Activated CD4-positive, alpha-beta memory T cell treated with anti-CD3 and anti-CD28 coated beads for 36 hours (primary cell): ENCODE measurements at regions of chr5 and their contacts with region 1.

Region 1: GRCh38 chr5:88680253-88681132 is 202.5 kb downstream of the MEF2C start:
- DNase-seq: peak; percentile 80
- H3K4me3 Mint-ChIP-seq: no peak overlapping the region
- H3K27ac Mint-ChIP-seq: no peak overlapping the region
- H3K4me1 Mint-ChIP-seq: peaks cover 12% of the 10 kb centered on the region
- H3K27me3 Mint-ChIP-seq: peaks cover 69% of the 10 kb centered on the region

Region 2: DNA sequence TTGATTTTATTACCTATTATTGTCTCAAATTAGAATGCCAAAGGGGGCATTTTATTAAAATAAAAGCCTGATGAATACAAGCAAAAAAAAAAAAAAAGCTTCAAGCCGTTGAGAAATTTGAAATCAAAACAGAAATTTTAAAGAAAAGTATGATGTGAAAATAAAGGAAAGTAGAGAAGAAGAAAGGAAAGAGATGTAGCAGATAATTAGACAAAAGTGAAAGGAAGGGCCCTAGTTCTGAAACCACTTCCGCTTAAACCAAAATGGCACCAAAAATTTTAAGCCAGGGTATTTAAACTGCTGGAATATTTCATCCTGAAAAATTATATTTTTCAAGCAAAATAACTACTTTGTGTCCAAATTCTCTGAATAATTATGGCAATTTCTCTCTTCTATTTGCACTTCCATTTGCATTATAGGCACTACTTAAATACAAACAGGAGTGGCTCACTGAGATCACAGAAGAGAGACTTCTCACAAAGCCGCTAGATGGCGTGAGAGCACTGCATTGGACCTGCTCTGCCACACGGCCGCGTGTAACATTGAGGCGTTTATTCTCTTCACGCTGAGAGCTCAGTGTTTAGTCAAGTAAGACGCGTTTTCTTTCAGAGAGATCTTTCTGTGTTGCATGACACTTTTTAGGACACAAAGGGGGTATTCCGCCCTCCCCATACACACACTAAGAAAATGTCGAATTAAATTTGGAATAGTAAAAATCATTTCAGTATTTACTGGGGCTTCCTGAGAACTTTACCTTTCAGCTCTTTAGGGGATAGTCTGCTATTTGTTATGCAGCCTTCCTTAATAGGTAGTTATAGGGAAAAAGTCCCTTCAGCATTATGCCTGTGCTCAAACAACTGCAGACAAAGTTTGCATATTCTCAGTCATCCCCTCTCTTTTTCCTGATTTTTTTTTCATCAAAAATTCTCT is 899.4 kb before region 1 on chr5:
- CTCF ChIA-PET with region 1: interaction called, 55 read pairs
- POLR2A ChIA-PET with region 1: no interaction called
- intact Hi-C with region 1: loop called (anchors 1 kb)
- DNase-seq: peak; percentile 82
- H3K4me3 Mint-ChIP-seq: no peak overlapping the region
- H3K27ac Mint-ChIP-seq: no peak overlapping the region
- H3K4me1 Mint-ChIP-seq: no peaks in the 10 kb centered on the region
- H3K27me3 Mint-ChIP-seq: peaks cover 18% of the 10 kb centered on the region

Region 3: GRCh38 chr5:88268385-88269184 is 411.9 kb before region 1 on chr5 and contains the start of gene TMEM161B:
- CTCF ChIA-PET with region 1: no interaction called
- POLR2A ChIA-PET with region 1: no interaction called
- intact Hi-C with region 1: loop called (anchors 10 kb)
- DNase-seq: peak; percentile 95
- H3K4me3 Mint-ChIP-seq: peak within 1 kb of the TSS; percentile 97
- H3K27ac Mint-ChIP-seq: peak within 1 kb of the TSS; percentile 94
- H3K4me1 Mint-ChIP-seq: peaks cover 45% of the 10 kb centered on the region
- H3K27me3 Mint-ChIP-seq: no peaks in the 10 kb centered on the region
- total RNA-seq, gene TMEM161B: 21.2 to 22.9 TPM

Region 4: GRCh38 chr5:88502179-88503040 is 178.1 kb before region 1 on chr5:
- CTCF ChIA-PET with region 1: no interaction called
- POLR2A ChIA-PET with region 1: no interaction called
- intact Hi-C with region 1: loop called (anchors 5 kb)
- DNase-seq: peak; percentile 12
- H3K4me3 Mint-ChIP-seq: peak overlapping the region; percentile 77
- H3K27ac Mint-ChIP-seq: peak overlapping the region; percentile 58
- H3K4me1 Mint-ChIP-seq: peaks cover 12% of the 10 kb centered on the region
- H3K27me3 Mint-ChIP-seq: no peaks in the 10 kb centered on the region

Region 5: DNA sequence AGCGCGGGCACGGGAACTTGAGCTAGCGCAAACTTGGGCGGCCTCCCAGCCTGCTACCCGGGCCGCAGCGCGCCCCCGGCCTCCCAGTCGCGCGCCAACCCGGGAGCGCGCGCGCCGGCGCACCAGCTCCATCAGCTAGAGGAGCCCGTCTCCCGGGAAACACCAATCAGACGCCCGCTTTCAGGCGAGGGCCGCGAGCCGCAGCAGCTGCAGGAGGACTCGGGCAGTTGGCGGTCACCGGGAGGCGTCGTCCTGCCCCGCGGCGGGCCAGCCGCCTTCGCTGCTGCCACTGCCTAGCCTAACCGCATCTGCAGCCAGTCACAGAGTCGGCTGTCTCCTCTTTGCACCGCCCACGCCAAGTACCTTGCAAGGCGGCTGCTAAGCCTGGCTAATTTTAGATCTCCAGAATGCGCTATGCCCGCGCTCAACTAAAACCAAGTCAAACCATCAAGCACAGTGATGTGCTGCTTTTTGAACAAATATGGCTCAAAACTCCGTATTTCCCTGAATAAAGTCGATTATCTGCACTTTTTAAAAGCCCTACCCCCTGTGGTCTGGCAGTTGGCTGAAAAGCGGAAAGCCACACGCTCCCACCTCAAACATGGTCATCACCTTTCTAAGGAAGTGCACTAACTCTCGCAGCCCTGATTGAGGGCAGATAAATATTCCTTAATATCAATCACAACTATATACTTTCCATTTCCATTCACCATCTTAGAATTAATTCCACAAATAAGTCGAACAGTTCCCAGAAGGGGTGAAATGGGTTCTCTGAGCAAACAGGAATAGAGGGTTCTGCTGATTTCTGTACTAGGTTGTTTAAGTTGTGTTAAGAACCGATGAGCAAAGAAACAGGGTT is 19.3 kb before region 1 on chr5:
- CTCF ChIA-PET with region 1: interaction called, 5 read pairs
- POLR2A ChIA-PET with region 1: interaction called, 5 read pairs
- intact Hi-C with region 1: loop called (anchors 2 kb)
- DNase-seq: peak; percentile 54
- H3K4me3 Mint-ChIP-seq: peak overlapping the region; percentile 49
- H3K27ac Mint-ChIP-seq: no peak overlapping the region
- H3K4me1 Mint-ChIP-seq: peaks cover 21% of the 10 kb centered on the region
- H3K27me3 Mint-ChIP-seq: peaks cover 64% of the 10 kb centered on the region

Region 6: DNA sequence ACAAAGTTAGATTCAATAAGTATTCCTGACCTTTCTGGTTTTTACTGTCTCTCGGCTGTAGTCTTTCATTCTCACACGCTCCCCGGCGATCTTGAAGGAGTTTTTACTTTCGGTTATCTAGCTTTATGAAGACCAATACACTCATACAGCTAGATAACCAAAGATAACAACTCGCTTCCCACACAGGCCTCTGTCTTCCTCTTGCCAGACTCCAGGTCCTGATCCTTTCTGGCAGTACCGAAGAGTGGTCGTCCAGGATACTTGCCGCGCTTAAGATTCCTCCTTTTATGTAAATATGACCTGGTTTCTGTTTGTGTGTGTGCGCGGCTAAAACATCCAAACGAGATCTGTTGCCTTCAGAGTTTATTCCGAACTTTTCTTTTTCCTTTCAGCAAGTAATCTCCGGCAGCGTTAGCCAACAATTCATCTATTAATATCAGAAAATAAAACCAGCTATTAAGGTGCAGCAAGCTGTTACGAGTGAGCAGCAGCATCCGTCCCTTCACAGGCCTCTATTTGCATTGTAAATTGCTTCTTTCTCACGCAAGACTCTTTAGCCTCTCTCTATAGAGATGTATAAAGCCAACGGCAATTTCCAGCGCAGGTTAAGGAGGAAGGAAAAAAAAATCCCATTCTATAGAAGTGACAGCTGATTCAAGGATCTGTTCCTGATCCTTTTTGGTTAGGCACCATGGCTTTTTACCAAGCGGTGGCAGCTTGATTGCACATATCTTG is 13.6 kb before region 1 on chr5:
- CTCF ChIA-PET with region 1: interaction called, 7 read pairs
- POLR2A ChIA-PET with region 1: no interaction called
- intact Hi-C with region 1: loop called (anchors 1 kb)
- DNase-seq: no peak
- H3K4me3 Mint-ChIP-seq: peak overlapping the region; percentile 71
- H3K27ac Mint-ChIP-seq: no peak overlapping the region
- H3K4me1 Mint-ChIP-seq: peaks cover 29% of the 10 kb centered on the region
- H3K27me3 Mint-ChIP-seq: peaks cover 75% of the 10 kb centered on the region

Region 7: DNA sequence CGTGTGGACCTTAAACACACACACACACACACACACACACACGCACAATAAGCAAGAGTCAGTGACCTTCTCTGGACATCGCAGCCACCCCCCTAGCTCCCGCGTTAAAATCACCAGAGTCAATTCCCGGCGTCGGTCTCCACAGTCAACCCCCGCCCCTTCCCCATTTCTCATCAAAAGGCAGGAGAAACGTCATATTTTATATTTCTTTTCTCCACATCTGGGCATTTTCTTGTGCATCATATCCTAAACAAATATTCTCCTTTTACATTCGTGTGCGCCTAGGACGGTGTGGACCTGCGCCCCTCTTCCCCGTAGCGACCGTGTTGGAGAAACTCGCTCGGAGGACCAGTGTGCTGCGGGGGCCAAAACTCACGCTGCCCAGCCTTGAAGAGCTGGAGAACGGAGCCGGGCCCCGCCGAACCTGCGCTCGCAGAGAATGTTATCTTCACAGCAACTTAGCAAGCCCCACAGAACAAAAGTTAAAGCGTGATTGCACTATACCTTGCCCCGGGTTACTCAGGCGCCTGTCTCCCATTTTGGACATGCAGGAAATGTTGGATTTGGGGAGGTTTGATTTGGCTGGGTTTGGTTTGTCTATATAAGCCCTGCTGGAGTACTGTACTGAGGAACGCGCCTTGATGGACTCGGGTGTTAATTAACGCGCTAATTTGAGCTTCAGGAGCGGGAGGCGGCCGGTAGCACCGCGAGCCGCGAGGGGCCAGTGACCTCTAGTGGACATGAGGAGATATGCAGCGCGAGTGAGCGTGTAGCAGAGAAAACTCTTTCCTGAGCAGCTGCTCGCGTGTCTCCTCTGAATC is 10.1 kb after region 1 on chr5:
- CTCF ChIA-PET with region 1: interaction called, 25 read pairs
- POLR2A ChIA-PET with region 1: no interaction called
- intact Hi-C with region 1: loop called (anchors 1 kb)
- DNase-seq: peak; percentile 73
- H3K4me3 Mint-ChIP-seq: peak overlapping the region; percentile 68
- H3K27ac Mint-ChIP-seq: peak overlapping the region; percentile 74
- H3K4me1 Mint-ChIP-seq: peaks cover 25% of the 10 kb centered on the region
- H3K27me3 Mint-ChIP-seq: peaks cover 84% of the 10 kb centered on the region